Pancreas (tissue), 10 donors: ENCODE measurements at regions of chr11 and their contacts with region 1.

Region 1: DNA sequence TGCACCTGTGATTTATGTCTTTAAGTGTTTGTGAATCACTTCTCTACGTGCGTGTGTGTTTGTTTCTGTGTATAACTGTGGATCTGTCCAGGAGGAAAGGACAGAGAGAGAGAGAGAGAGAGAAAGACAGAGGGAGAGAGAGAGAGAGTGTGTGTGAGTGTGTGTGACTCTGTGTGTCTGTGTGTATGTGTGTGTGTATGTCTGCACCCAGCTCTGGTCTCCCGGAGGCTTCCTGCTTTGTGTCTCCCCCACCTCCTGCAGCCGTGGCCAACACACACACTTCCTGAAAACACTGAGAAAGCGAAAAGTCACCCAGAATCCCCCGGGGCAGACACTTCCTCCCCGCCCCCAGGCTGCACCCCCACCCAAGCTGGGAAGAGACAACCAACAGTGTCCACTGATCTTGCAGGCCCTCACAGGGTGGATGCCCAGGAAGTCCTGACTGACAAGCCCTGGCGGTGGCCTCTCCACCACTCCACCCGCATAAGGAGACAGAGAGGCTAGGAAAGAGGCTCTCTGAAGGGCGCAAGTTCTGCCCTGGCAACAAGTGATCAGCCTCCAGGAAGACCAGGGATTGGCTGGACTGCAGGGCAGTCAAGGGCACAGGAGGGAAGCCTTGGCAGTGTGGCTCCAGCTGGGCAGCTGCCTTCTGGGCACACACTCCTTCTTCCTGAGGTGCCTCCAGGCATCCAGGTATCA is 30.0 kb downstream of the ARAP1 start:
- DNase-seq: peak; percentile 81 to 93 (median 90)
- ATAC-seq: peak; percentile 85 to 91 (median 90)
- H3K4me3 ChIP-seq: peak overlapping the region; percentile 44 to 67 (median 58)
- H3K27ac ChIP-seq: peak overlapping the region; percentile 65 to 94 (median 75)
- H3K4me1 ChIP-seq: peaks cover 13 to 27% (median 20%) of the 10 kb centered on the region in 3 donors
- H3K27me3 ChIP-seq: no peaks in the 10 kb centered on the region
- CTCF ChIP-seq: no peak

Region 2: DNA sequence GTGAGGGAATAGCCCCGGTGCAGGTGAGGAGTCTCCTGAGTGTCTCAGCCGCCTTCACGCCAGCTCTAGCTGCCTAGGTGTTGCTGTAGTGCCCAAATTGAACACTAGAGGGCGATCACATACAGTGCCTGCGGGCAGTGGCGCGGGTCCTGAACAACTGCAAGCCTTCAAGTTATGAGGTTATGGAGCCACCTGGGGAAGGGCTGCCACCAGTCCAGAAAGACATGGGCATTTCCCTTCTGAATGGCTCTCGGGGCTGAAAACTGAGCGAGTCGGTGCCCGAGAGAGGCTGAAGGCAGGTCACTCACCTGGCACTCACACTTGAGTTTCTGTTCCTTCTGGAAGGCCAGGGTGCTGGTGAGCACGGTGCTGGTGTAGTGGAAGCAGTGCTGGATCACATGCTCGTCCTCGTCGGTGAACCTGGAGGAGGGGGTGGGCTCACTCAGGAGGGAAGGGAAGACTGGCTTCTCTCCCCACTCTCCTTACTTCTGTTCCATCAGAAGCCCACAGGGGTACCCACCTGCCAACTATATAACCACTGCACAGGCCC is 136.4 kb before region 1 on chr11:
- intact Hi-C with region 1: no loop called
- DNase-seq: peak; percentile 45 to 78 (median 57)
- ATAC-seq: peak; percentile 68 to 87 (median 83)
- H3K4me3 ChIP-seq: no peak overlapping the region
- H3K27ac ChIP-seq: no peak overlapping the region
- H3K4me1 ChIP-seq: peaks cover 0 to 5% (median 0%) of the 10 kb centered on the region in 3 donors
- H3K27me3 ChIP-seq: no peaks in the 10 kb centered on the region
- CTCF ChIP-seq: peak; percentile 84 to 95 (median 94)

Region 3: DNA sequence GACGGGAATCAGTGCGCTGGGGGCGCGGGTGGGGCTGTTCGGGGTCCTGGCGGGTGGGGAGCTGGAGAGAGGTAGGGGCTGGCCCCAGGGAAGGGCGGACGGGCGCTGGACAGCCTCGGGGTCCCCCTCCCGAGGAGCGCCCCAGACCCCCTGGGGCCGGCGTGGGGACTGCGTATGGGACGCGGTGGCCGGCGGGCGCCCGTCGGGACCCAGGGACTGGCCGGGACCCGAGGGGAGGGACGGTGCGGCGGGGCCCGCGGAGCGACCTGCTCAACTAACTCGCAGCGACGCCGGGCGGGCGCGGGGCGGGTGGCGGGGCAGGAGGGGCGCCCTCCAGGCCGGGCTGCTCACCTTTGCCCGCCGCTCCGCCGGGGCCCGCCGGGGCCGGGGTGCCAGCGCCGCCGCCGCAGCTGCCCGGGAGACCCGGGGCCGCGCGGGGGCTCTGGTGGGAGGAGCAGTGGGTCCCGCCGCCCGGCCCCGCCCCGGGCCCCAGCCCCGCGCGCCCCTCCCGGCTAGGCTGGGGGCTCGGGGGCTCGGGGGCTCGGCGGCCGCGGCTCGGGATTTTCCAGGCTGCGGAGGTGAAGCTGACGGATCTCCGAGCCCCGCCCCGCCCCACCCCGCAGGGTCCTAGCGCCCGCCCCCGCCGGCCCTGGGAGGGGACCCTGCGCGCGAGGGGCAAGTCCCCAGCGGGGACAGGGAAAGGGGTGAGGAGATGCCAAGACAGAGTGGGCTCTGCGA is 59.3 kb after region 1 on chr11:
- intact Hi-C with region 1: loop called in 1 of 3 experiments (anchors 10 kb)
- DNase-seq: peak in 5 of 6 donors; percentile 47 to 81 (median 65)
- ATAC-seq: peak; percentile 15 to 29 (median 20)
- H3K4me3 ChIP-seq: peak overlapping the region; percentile 53 to 77 (median 72)
- H3K27ac ChIP-seq: peak overlapping the region; percentile 66 to 93 (median 82)
- H3K4me1 ChIP-seq: peaks cover 26 to 47% (median 37%) of the 10 kb centered on the region in 3 donors
- H3K27me3 ChIP-seq: no peaks in the 10 kb centered on the region
- CTCF ChIP-seq: no peak

Region 4: GRCh38 chr11:72793425-72794367 is 71.5 kb after region 1 on chr11 and contains the start of gene STARD10:
- intact Hi-C with region 1: loop called in 2 of 3 experiments (anchors 5 to 10 kb)
- DNase-seq: peak; percentile 93 to 99 (median 96)
- ATAC-seq: peak; percentile 96 to 99 (median 97)
- H3K4me3 ChIP-seq: peak within 1 kb of the TSS; percentile 40 to 58 (median 52)
- H3K27ac ChIP-seq: peak within 1 kb of the TSS; percentile 79 to 95 (median 83)
- H3K4me1 ChIP-seq: peaks cover 0 to 11% (median 9%) of the 10 kb centered on the region in 3 donors
- H3K27me3 ChIP-seq: no peaks in the 10 kb centered on the region
- CTCF ChIP-seq: peak; percentile 93 to 99 (median 96)
- total RNA-seq, gene STARD10: 99.5 to 187 (median 153) TPM